Activated naive CD4-positive, alpha-beta T cell treated with anti-CD3 and anti-CD28 coated beads for 36 hours (primary cell): ENCODE measurements at regions of chr4 and their contacts with region 1.

Region 1: DNA sequence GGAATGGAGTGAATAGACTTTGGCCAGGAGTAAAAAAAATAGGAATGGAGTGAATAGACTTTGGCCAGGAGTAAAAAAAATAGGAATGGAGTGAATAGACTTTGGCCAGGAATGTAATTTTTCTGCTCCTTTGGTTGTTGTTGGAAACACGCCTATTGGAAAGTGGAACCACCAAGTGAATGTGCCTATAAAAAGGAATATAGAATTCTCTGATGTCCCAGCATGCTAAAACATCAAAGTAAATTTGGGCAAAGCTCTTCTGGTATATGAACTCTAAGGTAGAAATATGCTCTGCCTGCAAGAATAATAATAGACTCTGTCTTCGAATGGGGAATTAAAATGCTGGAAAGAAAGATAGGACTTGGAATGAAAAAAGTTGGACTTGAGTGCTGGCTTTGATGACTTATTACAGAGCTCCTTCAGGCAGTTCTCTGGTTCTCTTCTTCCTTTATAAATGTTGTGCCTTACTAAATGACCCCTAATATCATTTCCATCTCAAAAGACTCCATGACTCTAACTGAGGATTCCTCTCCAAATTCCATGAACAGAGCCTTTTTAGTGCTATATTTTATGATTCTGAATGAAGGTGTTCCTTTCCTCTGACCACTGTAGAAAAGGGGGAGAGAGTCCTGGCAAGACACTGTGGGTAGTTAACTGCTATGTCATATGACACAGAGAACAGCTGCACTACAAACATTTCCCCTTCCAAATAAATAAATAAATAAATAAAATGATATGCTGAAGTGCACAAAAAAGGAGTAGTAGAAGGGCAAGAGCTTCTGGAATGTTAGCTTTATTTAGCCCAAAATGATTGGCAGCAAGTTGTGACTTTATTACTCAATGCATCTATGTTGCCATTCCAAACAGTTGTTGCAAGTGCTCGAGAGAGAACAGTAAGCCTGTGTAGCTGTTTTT is 13.5 kb upstream of the GBA3 start:
- DNase-seq: no peak
- H3K4me3 Mint-ChIP-seq: no peak overlapping the region
- H3K27ac Mint-ChIP-seq: no peak overlapping the region
- H3K4me1 Mint-ChIP-seq: peaks cover 51% of the 10 kb centered on the region
- H3K27me3 Mint-ChIP-seq: no peaks in the 10 kb centered on the region

Region 2: DNA sequence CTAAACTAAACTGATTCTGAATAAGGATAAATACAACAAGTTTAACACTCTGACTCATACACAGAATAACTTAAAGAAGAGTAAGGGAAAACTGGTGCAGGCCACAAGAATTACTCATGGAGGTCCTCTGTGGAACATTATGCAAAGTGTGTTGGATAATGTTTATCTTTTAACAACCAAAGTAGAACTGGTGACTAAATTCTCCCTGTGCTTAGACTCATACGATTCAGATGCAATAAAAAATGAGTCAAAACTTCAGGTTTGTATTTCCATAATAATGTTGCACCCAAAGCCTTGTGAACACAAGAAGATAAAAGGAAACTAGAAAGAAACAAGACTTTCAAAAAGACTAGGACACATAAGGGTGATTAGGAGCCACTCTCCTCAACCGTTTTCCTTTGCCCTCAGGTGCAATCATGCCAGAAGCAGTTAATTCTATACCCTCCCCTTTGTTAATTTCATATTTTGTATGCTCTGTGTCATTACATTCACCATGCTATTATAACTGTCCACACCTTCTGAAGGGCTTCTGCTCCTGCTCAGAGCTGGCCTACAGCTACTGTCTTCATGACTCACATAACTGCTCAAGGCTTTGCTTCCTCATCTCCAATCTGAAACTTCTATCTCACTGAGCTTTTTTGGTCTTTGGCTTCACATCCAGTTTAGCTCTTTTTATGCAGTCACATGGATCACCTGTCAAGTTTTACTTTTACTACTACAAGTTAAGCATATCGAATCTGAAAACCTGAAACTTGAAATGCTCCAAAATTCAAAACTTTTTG is 790.8 kb before region 1 on chr4:
- CTCF ChIA-PET with region 1: no interaction called
- intact Hi-C with region 1: loop called (anchors 10 kb)
- DNase-seq: no peak
- H3K4me3 Mint-ChIP-seq: no peak overlapping the region
- H3K27ac Mint-ChIP-seq: peak overlapping the region; percentile 51
- H3K4me1 Mint-ChIP-seq: peaks cover 7% of the 10 kb centered on the region
- H3K27me3 Mint-ChIP-seq: peaks cover 2% of the 10 kb centered on the region

Region 3: GRCh38 chr4:22634541-22635181 is 44.5 kb before region 1 on chr4:
- CTCF ChIA-PET with region 1: no interaction called
- intact Hi-C with region 1: loop called (anchors 5 kb)
- DNase-seq: no peak
- H3K4me3 Mint-ChIP-seq: no peak overlapping the region
- H3K27ac Mint-ChIP-seq: no peak overlapping the region
- H3K4me1 Mint-ChIP-seq: no peaks in the 10 kb centered on the region
- H3K27me3 Mint-ChIP-seq: no peaks in the 10 kb centered on the region